Transverse colon (tissue), 4 donors: ENCODE measurements at regions of chr1 and their contacts with region 1.

Region 1: DNA sequence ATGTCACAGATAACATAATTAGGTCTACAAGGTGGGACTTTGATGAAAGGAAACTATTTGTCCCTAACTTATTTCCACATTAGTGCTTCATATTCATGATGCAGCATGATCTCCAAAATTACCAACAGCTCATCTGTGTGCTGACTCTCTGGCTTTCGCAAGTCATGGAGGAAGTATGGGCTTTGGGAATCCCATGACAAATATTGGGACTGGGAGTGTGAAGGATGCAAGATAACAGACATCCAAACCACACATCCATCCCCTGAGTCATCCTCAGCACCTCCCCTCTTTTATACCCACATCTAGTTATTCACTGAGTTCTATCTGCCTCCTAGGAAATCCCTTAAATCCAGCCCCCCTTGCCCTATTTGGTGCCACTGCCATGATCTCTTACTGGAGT is 102.8 kb upstream of the COL24A1 start:
- DNase-seq: no peak
- H3K4me3 ChIP-seq: no peak overlapping the region
- H3K27ac ChIP-seq: no peak overlapping the region
- H3K4me1 ChIP-seq: no peaks in the 10 kb centered on the region
- H3K27me3 ChIP-seq: no peaks in the 10 kb centered on the region
- CTCF ChIP-seq: no peak
- EP300 ChIP-seq: no peak
- POLR2A ChIP-seq: no peak

Region 2: DNA sequence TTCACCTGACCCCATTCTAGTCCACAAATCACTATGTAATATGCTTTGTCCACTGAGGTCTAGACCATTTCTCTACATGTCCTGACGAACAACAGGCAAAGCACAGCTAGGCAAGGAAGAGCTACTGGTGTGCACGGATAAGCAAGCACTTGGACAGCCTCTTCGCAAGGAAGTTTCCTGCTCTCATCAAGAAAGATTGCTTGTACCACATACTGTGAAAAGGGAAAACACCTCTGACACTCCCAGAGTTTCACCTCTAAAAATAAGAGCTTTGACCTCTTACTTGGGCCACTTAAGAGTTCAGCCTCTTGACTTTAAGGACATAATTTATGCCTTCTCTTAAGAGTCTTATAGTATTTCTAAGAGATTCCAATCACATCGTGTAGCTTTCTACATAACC is 1330.4 kb before region 1 on chr1:
- in situ Hi-C with region 1: no loop called
- intact Hi-C with region 1: loop called (anchors 10 kb)
- DNase-seq: no peak
- H3K4me3 ChIP-seq: no peak overlapping the region
- H3K27ac ChIP-seq: no peak overlapping the region
- H3K4me1 ChIP-seq: no peaks in the 10 kb centered on the region
- H3K27me3 ChIP-seq: no peaks in the 10 kb centered on the region
- CTCF ChIP-seq: no peak
- EP300 ChIP-seq: no peak
- POLR2A ChIP-seq: no peak

Region 3: GRCh38 chr1:85019994-85020393 is 1239.4 kb before region 1 on chr1:
- in situ Hi-C with region 1: no loop called
- intact Hi-C with region 1: no loop called
- DNase-seq: no peak
- H3K4me3 ChIP-seq: no peak overlapping the region
- H3K27ac ChIP-seq: no peak overlapping the region
- H3K4me1 ChIP-seq: no peaks in the 10 kb centered on the region
- H3K27me3 ChIP-seq: no peaks in the 10 kb centered on the region
- CTCF ChIP-seq: no peak
- EP300 ChIP-seq: no peak
- POLR2A ChIP-seq: no peak

Region 4: GRCh38 chr1:86110451-86111129 is 148.8 kb before region 1 on chr1:
- in situ Hi-C with region 1: no loop called
- intact Hi-C with region 1: no loop called
- DNase-seq: no peak
- H3K4me3 ChIP-seq: no peak overlapping the region
- H3K27ac ChIP-seq: no peak overlapping the region
- H3K4me1 ChIP-seq: no peaks in the 10 kb centered on the region
- H3K27me3 ChIP-seq: no peaks in the 10 kb centered on the region
- CTCF ChIP-seq: no peak
- EP300 ChIP-seq: no peak
- POLR2A ChIP-seq: no peak

Region 5: GRCh38 chr1:86277936-86278335 is 18.5 kb after region 1 on chr1:
- in situ Hi-C with region 1: no loop called
- intact Hi-C with region 1: loop called (anchors 1 kb)
- DNase-seq: no peak
- H3K4me3 ChIP-seq: no peak overlapping the region
- H3K27ac ChIP-seq: no peak overlapping the region
- H3K4me1 ChIP-seq: peaks cover 0 to 3% (median 0%) of the 10 kb centered on the region in 4 donors
- H3K27me3 ChIP-seq: no peaks in the 10 kb centered on the region
- CTCF ChIP-seq: no peak
- EP300 ChIP-seq: no peak
- POLR2A ChIP-seq: no peak